ENCODE measurements at regions of chr11 and their contacts with region 1.

Region 1: DNA sequence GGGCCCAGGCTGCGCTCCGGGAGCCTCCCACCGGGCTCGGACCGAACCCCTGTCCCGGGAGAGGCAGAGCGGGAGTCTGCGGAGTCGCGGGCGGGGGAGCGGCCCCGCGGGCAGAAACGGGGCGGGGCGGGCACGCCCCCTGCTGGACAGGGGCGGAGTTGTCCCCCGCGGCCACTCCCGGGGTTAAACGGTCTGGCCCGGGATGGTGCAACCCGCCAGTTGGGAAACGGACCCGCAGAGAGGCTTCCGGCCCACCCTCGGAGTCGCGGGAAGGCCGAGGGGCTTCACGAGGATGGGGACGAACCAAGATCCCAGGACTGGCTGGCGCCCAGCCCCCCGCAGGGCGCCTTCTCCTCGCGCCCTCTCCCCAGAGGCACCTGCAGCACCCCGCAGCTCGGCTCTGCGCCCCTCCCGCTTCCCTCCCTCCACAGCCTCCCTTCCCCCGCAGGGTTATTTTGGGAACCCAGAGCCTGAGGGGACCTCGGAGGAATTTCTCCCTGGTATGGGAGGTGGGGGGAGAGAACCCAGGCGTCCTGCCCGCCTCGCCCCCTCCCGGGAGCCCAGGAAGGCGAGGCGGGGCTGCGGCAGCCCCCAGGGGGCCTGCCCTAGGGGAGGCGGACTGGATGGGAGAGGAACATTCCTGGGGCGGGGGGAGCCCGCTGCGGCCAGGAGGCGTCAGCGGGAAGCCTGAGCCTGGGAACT is 902 bp downstream of the RASGRP2 start:
- DNase-seq: peak; percentile 79
- H3K4me3 Mint-ChIP-seq: peak overlapping the region; percentile 95
- H3K27ac Mint-ChIP-seq: no peak overlapping the region
- H3K4me1 Mint-ChIP-seq: peaks cover 47% of the 10 kb centered on the region
- H3K27me3 Mint-ChIP-seq: no peaks in the 10 kb centered on the region

Region 2: GRCh38 chr11:64729851-64730382 is 13.1 kb before region 1 on chr11:
- CTCF ChIA-PET with region 1: interaction called, 3 read pairs
- POLR2A ChIA-PET with region 1: interaction called, 11 read pairs
- DNase-seq: no peak
- H3K4me3 Mint-ChIP-seq: no peak overlapping the region
- H3K27ac Mint-ChIP-seq: no peak overlapping the region
- H3K4me1 Mint-ChIP-seq: peaks cover 11% of the 10 kb centered on the region
- H3K27me3 Mint-ChIP-seq: no peaks in the 10 kb centered on the region

Region 3: GRCh38 chr11:64767344-64768299 is 24.6 kb after region 1 on chr11:
- CTCF ChIA-PET with region 1: interaction called, 132 read pairs
- POLR2A ChIA-PET with region 1: interaction called, 435 read pairs
- DNase-seq: peak; percentile 83
- H3K4me3 Mint-ChIP-seq: no peak overlapping the region
- H3K27ac Mint-ChIP-seq: peak overlapping the region; percentile 85
- H3K4me1 Mint-ChIP-seq: peaks cover 90% of the 10 kb centered on the region
- H3K27me3 Mint-ChIP-seq: no peaks in the 10 kb centered on the region

Region 4: GRCh38 chr11:64803163-64803845 is 60.3 kb after region 1 on chr11 and contains the start of gene MAP4K2:
- CTCF ChIA-PET with region 1: no interaction called
- POLR2A ChIA-PET with region 1: interaction called, 18 read pairs
- DNase-seq: peak; percentile 91
- H3K4me3 Mint-ChIP-seq: peak within 1 kb of the TSS; percentile 85
- H3K27ac Mint-ChIP-seq: peak within 1 kb of the TSS; percentile 86
- H3K4me1 Mint-ChIP-seq: peaks cover 39% of the 10 kb centered on the region
- H3K27me3 Mint-ChIP-seq: no peaks in the 10 kb centered on the region
- total RNA-seq, gene MAP4K2: 95.6 to 98.0 TPM

Region 5: DNA sequence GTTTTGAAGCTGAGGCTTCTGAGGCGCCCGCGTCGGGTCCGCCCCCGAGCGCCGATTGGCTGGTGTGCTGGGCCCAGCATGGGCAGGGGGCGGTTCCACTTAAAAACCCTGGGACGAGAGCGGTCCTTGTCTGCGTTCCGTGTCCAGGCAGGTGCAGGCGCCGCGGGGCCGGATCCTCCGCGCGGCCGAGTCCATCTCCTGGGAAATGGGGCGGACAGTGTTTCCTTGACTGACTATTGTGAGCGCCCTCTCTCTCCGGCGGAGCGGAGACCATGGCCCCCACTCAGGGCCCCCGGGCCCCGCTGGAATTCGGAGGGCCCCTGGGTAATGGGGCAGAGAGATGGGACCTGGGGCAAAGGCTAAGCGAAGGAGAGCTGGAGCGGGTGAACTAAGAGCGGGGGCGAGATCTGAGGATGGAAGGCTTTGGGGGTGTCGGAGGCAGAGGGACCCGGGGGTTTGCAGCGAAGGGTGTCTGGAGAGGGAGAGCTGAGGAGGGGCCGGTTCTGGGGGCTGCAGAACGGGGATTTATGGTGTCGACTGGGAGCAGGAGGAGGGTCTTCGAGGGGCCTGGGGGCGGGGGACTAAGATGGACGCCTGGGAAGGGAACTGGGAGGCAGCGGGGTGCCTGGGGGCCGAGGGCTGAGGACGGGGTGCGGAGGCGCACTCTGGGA is 368.8 kb after region 1 on chr11 and contains the start of gene TM7SF2:
- CTCF ChIA-PET with region 1: no interaction called
- POLR2A ChIA-PET with region 1: interaction called, 10 read pairs
- DNase-seq: peak; percentile 96
- H3K4me3 Mint-ChIP-seq: peak within 1 kb of the TSS; percentile 87
- H3K27ac Mint-ChIP-seq: peak within 1 kb of the TSS; percentile 80
- H3K4me1 Mint-ChIP-seq: peaks cover 49% of the 10 kb centered on the region
- H3K27me3 Mint-ChIP-seq: no peaks in the 10 kb centered on the region
- total RNA-seq, gene TM7SF2: 27.2 to 28.4 TPM